ENCODE measurements at regions of chr7 and their contacts with region 1.

Region 1: DNA sequence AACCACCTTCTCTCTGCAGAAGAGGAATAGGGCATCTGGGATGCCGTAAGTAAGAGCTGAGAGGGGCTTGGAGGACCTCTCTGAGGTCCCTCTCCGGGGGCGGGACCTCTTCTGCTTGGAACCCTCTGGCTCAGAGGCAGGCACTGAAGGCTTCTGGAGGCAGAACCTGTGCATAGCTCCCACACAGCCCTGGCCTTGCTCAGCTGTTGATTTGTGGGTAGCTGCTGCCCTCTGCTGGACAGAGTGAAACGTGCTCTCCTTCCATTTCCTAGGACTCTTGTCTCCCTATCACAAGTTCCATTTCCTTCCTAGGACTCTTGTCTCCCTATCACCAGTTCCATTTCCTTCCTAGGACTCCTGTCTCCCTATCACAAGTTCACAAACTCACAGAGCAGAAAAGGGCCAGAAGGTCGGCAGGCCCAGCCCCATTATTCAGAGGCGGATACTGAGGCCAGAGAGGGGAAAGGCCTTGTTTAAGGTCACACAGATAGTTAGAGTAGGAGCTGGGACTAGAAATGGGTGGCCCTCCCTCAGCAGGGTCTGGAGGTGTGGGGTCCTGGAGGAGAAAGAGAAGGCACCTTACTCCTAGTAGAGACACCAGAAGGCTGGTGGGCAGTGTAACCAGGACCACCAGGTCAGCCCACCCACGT is 30.3 kb upstream of the GARS1 start:
- DNase-seq: peak; percentile 80
- ATAC-seq: peak; percentile 96
- H3K4me3 ChIP-seq: no peak overlapping the region
- H3K27ac ChIP-seq: no peak overlapping the region
- H3K4me1 ChIP-seq: peaks cover 6% of the 10 kb centered on the region
- H3K27me3 ChIP-seq: no peaks in the 10 kb centered on the region
- CTCF ChIP-seq: peak; percentile 91
- POLR2A ChIP-seq: no peak
- RAD21 ChIP-seq: peak; percentile 95

Region 2: DNA sequence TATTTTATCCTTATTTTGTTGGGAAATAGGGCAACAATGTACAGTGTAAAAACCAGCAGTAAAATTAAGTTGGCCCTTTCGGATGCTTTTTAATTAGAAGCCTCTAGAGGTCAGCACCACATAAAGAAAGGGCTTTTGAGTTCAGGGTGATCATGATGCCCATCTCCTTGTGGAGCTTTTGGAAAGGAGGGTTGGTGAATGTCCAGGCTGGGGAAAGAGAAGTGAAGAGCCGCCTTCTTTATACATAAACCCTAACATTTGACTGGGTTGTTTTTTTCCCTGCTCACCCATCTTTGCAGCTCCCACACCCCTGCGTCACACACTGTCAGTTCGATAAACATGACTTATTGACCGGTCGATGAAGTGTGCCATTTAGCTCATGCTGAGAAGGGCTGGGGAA is 399.8 kb before region 1 on chr7:
- CTCF ChIA-PET with region 1: no interaction called
- POLR2A ChIA-PET with region 1: no interaction called
- dilution Hi-C with region 1: no loop called
- in situ Hi-C with region 1: loop called (anchors 10 kb)
- intact Hi-C with region 1: loop called (anchors 1 kb)
- DNase-seq: peak; percentile 54
- ATAC-seq: peak; percentile 69
- H3K4me3 ChIP-seq: no peak overlapping the region
- H3K27ac ChIP-seq: no peak overlapping the region
- H3K4me1 ChIP-seq: peaks cover 5% of the 10 kb centered on the region
- H3K27me3 ChIP-seq: no peaks in the 10 kb centered on the region
- CTCF ChIP-seq: peak; percentile 71
- POLR2A ChIP-seq: no peak
- RAD21 ChIP-seq: peak; percentile 70

Region 3: DNA sequence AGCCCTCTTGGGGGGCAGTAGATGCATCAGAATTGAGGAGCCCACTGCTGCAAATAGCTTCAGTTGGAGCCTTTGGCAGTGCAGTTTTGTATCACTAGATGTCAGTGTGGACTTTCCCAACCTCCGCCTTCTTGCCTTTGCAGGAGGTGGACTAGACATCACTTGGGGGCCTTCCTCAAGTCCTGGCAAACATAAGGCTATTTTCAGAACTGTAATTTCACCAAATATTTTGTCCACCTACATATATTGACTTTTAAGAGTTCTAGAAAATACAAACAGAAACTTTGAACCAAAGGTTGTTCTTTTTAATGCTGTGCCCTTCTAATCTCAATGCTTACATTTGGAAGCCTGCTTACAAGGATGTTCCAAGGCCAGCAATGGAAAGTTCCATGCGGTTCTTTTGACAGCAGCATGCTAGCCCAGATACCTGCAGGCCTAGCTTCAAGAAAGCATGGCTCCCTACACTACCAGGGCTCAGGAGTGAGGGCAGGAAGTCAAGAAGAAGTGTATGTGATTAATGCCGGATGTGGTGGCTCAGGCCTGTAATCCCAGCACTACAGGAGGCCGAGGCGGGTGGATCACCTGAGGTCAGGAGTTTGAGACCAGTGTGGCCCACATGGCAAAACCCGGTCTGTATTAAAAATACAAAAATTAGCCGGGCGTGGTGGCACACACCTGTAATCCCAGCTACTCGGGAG is 288.0 kb before region 1 on chr7:
- CTCF ChIA-PET with region 1: interaction called, 3 read pairs
- POLR2A ChIA-PET with region 1: no interaction called
- dilution Hi-C with region 1: no loop called
- in situ Hi-C with region 1: loop called (anchors 5 kb)
- intact Hi-C with region 1: loop called (anchors 1 kb)
- DNase-seq: peak; percentile 62
- ATAC-seq: peak; percentile 94
- H3K4me3 ChIP-seq: no peak overlapping the region
- H3K27ac ChIP-seq: no peak overlapping the region
- H3K4me1 ChIP-seq: no peaks in the 10 kb centered on the region
- H3K27me3 ChIP-seq: peaks cover 23% of the 10 kb centered on the region
- CTCF ChIP-seq: peak; percentile 76
- POLR2A ChIP-seq: no peak
- RAD21 ChIP-seq: peak; percentile 86

Region 4: DNA sequence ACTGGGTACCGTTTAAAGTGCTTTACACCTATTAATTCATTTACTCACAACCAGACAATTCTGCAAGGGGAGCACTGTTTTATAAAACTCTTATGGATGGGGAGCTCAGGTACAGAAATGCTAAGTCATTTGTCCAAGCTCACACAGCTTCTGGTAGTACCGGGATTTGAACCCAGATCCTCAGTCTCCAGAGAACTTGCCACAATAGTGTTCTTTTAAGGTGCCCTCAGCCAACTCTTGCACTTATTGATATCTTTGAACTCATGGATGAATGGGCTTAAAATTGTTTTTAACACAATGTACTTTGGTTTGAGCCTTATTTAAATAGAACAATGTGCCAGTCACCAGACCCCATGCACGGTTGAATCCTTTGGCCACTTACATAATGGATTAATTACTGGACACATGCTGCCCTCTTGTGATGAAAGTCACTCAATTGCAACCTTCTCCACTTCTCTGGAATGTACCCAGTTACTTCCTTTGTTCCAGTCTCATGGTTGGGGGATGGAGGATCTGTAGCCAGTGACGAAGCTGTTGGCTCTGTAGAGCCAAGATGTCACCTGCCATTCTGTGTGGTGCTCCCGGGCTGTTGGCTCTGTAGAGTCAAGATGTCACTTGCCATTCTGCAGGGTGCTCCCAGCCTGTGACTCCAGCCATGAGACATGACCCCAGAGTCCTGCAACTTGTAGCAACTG is 151.4 kb before region 1 on chr7:
- CTCF ChIA-PET with region 1: no interaction called
- POLR2A ChIA-PET with region 1: no interaction called
- dilution Hi-C with region 1: no loop called
- in situ Hi-C with region 1: no loop called
- intact Hi-C with region 1: loop called (anchors 2 kb)
- DNase-seq: peak; percentile 83
- ATAC-seq: peak; percentile 99
- H3K4me3 ChIP-seq: no peak overlapping the region
- H3K27ac ChIP-seq: no peak overlapping the region
- H3K4me1 ChIP-seq: no peaks in the 10 kb centered on the region
- H3K27me3 ChIP-seq: peaks cover 2% of the 10 kb centered on the region; the same call in 1 of the 2 replicates
- CTCF ChIP-seq: peak; percentile 78
- POLR2A ChIP-seq: 0 out of 2 replicates have a peak, but pooled peaks have one; percentile 36
- RAD21 ChIP-seq: peak; percentile 91

Region 5: GRCh38 chr7:30510124-30511075 is 54.0 kb before region 1 on chr7:
- CTCF ChIA-PET with region 1: interaction called, 4 read pairs
- POLR2A ChIA-PET with region 1: no interaction called
- dilution Hi-C with region 1: no loop called
- in situ Hi-C with region 1: no loop called
- intact Hi-C with region 1: loop called (anchors 1 kb)
- DNase-seq: peak; percentile 44
- ATAC-seq: peak; percentile 84; the same call in 1 of the 2 replicates
- H3K4me3 ChIP-seq: no peak overlapping the region
- H3K27ac ChIP-seq: no peak overlapping the region
- H3K4me1 ChIP-seq: no peaks in the 10 kb centered on the region
- H3K27me3 ChIP-seq: no peaks in the 10 kb centered on the region
- CTCF ChIP-seq: peak; percentile 68
- POLR2A ChIP-seq: no peak
- RAD21 ChIP-seq: peak; percentile 59

Region 6: DNA sequence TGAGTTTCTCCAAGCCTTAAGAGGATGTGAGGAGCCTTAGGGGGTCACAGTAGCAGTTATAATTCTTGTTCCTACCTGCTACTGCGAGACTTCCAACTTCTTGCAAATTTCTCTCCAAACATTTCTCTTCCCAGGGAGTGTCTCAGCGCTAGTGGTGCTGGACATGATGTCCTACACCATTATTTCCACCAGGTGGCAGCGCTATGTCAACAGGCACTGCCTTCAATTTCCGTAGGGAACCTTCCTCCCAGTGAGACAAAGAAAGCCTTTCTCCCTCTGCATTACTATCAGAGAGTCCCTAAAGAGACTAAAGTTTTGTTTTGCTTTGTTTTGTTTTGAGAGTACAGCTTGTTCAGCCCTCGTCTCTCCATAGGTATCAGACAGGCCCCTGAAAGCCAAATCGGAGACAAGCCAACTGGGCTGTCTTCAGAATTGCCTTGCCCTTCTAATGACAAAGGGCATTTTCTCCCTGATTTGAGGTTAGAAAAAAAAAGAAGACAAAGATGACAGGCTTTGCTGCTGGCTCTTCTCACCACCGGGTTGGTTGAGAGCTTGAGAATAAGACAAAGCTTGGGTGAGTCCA is 15.5 kb before region 1 on chr7:
- CTCF ChIA-PET with region 1: interaction called, 16 read pairs
- POLR2A ChIA-PET with region 1: no interaction called
- dilution Hi-C with region 1: no loop called
- in situ Hi-C with region 1: no loop called
- intact Hi-C with region 1: loop called (anchors 2 kb)
- DNase-seq: peak; percentile 73
- ATAC-seq: peak; percentile 96
- H3K4me3 ChIP-seq: no peak overlapping the region
- H3K27ac ChIP-seq: no peak overlapping the region
- H3K4me1 ChIP-seq: peaks cover 2% of the 10 kb centered on the region; the same call in 1 of the 2 replicates
- H3K27me3 ChIP-seq: no peaks in the 10 kb centered on the region
- CTCF ChIP-seq: peak; percentile 70
- POLR2A ChIP-seq: no peak
- RAD21 ChIP-seq: peak; percentile 57

Region 7: GRCh38 chr7:30740424-30741181 is 176.2 kb after region 1 on chr7:
- CTCF ChIA-PET with region 1: no interaction called
- POLR2A ChIA-PET with region 1: no interaction called
- dilution Hi-C with region 1: no loop called
- in situ Hi-C with region 1: no loop called
- intact Hi-C with region 1: loop called (anchors 2 kb)
- DNase-seq: peak; percentile 55
- ATAC-seq: peak; percentile 93
- H3K4me3 ChIP-seq: no peak overlapping the region
- H3K27ac ChIP-seq: no peak overlapping the region
- H3K4me1 ChIP-seq: no peaks in the 10 kb centered on the region
- H3K27me3 ChIP-seq: peaks cover 11% of the 10 kb centered on the region
- CTCF ChIP-seq: peak; percentile 94
- POLR2A ChIP-seq: no peak
- RAD21 ChIP-seq: peak; percentile 86